A673 (cell line): ENCODE measurements at regions of chr13 and their contacts with region 1.

Region 1: GRCh38 chr13:33542283-33543088 is 256.9 kb upstream of the STARD13 start:
- DNase-seq: peak; percentile 99
- H3K4me3 ChIP-seq: peak overlapping the region; percentile 43
- H3K27ac ChIP-seq: peak overlapping the region; percentile 99
- H3K4me1 ChIP-seq: peaks cover 64% of the 10 kb centered on the region
- H3K27me3 ChIP-seq: no peaks in the 10 kb centered on the region
- CTCF ChIP-seq: peak; percentile 95

Region 2: DNA sequence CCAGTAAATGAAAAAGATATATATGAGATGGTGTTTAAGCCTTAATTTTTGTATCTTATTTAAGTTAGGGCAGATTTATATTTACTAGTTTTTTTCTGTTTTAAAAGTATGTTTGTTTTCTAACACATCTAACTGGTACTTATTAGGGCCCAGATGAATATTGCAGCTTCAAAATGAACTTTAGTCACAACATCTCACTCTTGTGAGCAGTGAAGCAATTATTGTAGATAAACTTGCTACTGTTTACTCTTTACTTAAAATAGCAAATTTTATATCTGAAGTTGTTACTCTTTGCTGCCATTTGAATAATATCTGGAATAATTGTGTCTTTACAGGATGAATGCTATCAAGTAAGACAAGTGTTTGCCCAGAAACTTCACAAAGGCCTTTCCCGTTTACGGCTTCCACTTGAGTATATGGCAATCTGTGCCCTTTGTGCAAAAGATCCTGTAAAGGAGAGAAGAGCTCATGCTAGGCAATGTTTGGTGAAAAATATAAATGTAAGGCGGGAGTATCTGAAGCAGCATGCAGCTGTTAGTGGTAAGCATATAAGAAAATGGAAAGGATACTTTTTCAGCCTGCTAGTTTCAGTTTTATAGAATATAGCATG is 789.4 kb before region 1 on chr13:
- CTCF ChIA-PET with region 1: no interaction called
- POLR2A ChIA-PET with region 1: no interaction called
- intact Hi-C with region 1: no loop called
- DNase-seq: no peak
- H3K4me3 ChIP-seq: no peak overlapping the region
- H3K27ac ChIP-seq: no peak overlapping the region
- H3K4me1 ChIP-seq: no peaks in the 10 kb centered on the region
- H3K27me3 ChIP-seq: no peaks in the 10 kb centered on the region
- CTCF ChIP-seq: no peak

Region 3: DNA sequence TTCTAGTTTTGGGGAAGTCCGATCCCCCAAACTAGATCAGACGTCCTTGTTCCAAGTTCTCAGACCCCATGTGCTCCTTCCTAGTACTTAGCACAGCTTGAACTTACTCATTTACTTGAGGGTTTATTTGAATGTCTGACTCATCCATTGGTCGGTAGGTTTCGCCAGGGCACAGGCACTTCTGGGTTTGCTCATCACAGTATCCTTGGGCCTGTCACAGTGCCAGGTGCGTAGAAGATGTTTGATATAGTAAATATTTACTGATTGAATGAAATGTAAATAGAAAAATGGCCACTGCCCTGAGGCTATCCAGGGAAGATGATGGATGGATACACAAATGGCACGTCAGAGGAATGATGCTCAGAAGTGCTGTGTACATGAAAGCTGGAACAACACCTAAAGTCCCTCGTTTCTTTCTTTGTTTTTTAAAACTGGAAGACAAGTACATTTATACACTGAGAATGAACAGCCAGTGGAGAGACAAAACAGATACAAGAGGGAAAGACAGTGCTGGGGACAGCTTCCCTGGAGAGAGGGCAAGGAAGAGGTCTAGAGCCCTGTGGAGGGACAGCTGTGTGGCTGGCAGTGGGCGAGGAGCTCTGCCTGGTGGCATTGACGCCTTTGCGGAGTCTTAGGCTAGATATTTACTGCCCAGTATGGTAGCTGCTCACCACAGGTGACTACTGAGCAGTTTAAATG is 557.5 kb before region 1 on chr13:
- CTCF ChIA-PET with region 1: no interaction called
- POLR2A ChIA-PET with region 1: no interaction called
- intact Hi-C with region 1: no loop called
- DNase-seq: no peak
- H3K4me3 ChIP-seq: no peak overlapping the region
- H3K27ac ChIP-seq: no peak overlapping the region
- H3K4me1 ChIP-seq: no peaks in the 10 kb centered on the region
- H3K27me3 ChIP-seq: no peaks in the 10 kb centered on the region
- CTCF ChIP-seq: no peak

Region 4: DNA sequence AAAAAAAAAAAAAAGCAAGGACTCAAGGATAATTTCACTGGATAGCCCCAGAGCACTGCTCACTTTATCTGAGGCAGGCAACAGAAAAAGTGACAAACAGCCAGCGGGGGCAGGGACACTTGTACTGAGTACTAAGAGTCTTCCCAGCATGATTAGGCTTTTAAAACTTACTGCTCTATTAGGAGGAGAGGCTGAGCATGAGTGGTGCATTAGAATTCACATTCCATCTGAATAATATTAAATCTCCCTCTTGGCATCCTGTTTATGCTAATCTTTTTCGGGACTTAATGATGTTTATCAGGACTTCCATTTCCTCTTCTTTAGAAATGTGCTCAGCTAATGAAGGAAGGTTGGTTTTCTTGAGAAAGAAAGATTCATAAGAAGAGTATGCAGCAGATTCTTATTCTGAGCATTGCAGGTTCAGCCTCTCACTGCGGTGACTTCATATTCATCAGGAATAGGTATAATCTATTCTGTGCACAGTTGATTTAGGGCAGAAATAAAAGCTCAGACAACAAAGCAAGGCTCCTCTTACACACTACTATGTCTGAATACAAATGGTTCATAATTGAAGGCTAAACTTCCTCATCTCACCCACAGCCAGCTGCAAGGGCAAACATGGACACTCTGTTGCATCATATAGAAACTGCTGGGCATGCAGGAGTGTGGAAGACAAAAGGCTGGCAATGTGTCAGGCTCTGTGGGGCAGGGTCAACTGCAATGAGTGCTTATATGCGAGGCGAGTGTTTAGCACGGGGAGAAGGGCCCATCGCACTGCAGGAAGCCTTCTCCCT is 419.2 kb before region 1 on chr13:
- CTCF ChIA-PET with region 1: no interaction called
- POLR2A ChIA-PET with region 1: no interaction called
- intact Hi-C with region 1: loop called (anchors 5 kb)
- DNase-seq: peak; percentile 98
- H3K4me3 ChIP-seq: no peak overlapping the region
- H3K27ac ChIP-seq: peak overlapping the region; percentile 98
- H3K4me1 ChIP-seq: peaks cover 74% of the 10 kb centered on the region
- H3K27me3 ChIP-seq: no peaks in the 10 kb centered on the region
- CTCF ChIP-seq: no peak

Region 5: GRCh38 chr13:33228648-33229445 is 313.6 kb before region 1 on chr13:
- CTCF ChIA-PET with region 1: interaction called, 4 read pairs
- POLR2A ChIA-PET with region 1: no interaction called
- intact Hi-C with region 1: loop called (anchors 1 kb)
- DNase-seq: peak; percentile 73
- H3K4me3 ChIP-seq: no peak overlapping the region
- H3K27ac ChIP-seq: peak overlapping the region; percentile 88
- H3K4me1 ChIP-seq: peaks cover 52% of the 10 kb centered on the region
- H3K27me3 ChIP-seq: no peaks in the 10 kb centered on the region
- CTCF ChIP-seq: peak; percentile 94

Region 6: DNA sequence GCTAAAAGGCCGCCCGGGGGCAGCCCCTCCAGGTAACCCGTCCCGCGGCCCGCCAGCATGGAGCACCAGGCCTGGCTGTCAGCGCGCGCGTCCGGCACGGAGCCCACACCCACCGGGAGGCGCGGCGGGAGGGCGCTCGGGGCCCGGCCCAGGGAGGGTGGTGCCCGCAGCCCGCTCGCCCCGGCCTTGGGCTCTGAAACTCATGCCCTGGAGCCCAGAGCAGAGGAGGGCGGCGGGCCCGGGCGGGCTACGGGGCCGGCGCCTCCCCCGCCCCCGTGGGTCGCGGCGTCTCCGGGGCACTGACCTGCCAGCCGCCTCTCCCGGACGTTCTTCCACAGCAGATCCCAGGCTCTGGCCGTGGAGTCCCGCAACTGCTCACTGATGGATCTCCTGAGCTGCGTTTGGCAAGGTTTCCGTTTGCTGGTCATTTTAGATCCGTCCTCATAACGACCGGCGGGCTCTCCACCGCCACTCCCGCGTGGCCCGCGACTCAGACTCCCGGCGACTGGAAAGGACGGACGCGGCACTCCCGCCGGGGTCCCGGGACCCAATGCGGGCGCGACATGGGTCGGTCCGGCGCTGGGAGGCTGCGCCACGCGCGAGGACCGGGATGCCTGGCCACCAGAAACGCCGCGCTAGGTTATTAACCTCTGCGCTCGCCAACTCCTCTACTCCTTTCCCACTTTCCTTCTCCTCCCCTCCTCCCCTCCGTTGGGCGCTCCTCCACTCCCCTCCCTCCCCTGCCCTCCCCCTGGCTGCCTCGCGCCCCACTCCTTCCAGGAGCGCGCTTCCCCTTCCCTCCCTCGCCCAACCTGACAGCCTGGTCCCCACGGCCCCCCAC is 192.3 kb before region 1 on chr13:
- CTCF ChIA-PET with region 1: interaction called, 3 read pairs
- POLR2A ChIA-PET with region 1: no interaction called
- intact Hi-C with region 1: loop called (anchors 2 kb)
- DNase-seq: peak; percentile 45
- H3K4me3 ChIP-seq: peak overlapping the region; percentile 69
- H3K27ac ChIP-seq: peak overlapping the region; percentile 69
- H3K4me1 ChIP-seq: peaks cover 24% of the 10 kb centered on the region
- H3K27me3 ChIP-seq: no peaks in the 10 kb centered on the region
- CTCF ChIP-seq: no peak

Region 7: DNA sequence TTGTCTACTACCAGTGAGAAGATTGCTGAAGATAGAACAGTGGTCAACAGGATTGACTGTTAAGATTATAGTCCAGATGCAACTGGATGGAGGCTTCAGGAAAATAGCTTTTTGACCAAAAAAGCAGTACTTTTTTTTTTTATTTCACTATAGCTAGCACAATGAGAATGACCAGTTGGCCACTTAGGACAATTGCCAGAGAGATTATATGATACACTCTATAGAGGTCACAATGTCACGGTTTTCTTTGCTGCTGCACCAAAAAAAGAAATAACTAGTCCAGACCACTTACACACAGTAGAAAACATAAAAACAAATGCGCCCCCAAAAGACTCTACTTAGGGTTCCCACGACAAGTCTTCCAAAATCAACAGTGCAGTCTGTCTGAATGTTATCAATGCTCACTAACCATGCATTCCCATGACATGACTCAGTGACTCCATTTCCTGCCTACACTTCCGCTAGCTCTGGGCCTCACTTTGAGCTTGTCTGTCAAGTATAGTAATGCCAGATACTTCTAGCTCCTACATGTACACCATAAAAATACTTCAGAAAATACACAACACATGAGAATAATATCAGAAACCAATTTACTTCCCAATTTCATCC is 47.8 kb before region 1 on chr13:
- CTCF ChIA-PET with region 1: no interaction called
- POLR2A ChIA-PET with region 1: interaction called, 3 read pairs
- intact Hi-C with region 1: loop called (anchors 2 kb)
- DNase-seq: peak; percentile 96
- H3K4me3 ChIP-seq: no peak overlapping the region
- H3K27ac ChIP-seq: peak overlapping the region; percentile 78
- H3K4me1 ChIP-seq: peaks cover 61% of the 10 kb centered on the region
- H3K27me3 ChIP-seq: no peaks in the 10 kb centered on the region
- CTCF ChIP-seq: no peak